CD8-positive, alpha-beta T cell (primary cell): ENCODE measurements at regions of chr7 and their contacts with region 1.

Region 1: GRCh38 chr7:128409596-128410160 is at the start of gene IMPDH1:
- DNase-seq: peak; percentile 65 to 92 (median 86)
- ATAC-seq: peak; percentile 75
- H3K4me3 ChIP-seq: peak within 1 kb of the TSS; percentile 93 to 99
- H3K4me3 Mint-ChIP-seq: peak within 1 kb of the TSS; percentile 91
- H3K27ac ChIP-seq: peak within 1 kb of the TSS; percentile 74 to 84
- H3K27ac Mint-ChIP-seq: peak within 1 kb of the TSS; percentile 84
- H3K4me1 ChIP-seq: peaks cover 37% of the 10 kb centered on the region
- H3K4me1 Mint-ChIP-seq: peaks cover 40% of the 10 kb centered on the region
- H3K27me3 ChIP-seq: no peaks in the 10 kb centered on the region
- H3K27me3 Mint-ChIP-seq: no peaks in the 10 kb centered on the region
- CTCF ChIP-seq: no peak
- total RNA-seq, gene IMPDH1: 19.6 to 20.6 TPM

Region 2: GRCh38 chr7:127651556-127652332 is 757.9 kb before region 1 on chr7 and contains the start of gene SND1:
- CTCF ChIA-PET with region 1: no interaction called
- POLR2A ChIA-PET with region 1: no interaction called
- intact Hi-C with region 1: loop called in 1 of 2 experiments (anchors 5 kb)
- DNase-seq: peak; percentile 96 to 100 (median 98)
- ATAC-seq: peak; percentile 94
- H3K4me3 ChIP-seq: peak within 1 kb of the TSS; percentile 82 to 98
- H3K4me3 Mint-ChIP-seq: peak within 1 kb of the TSS; percentile 98
- H3K27ac ChIP-seq: peak within 1 kb of the TSS; percentile 92 to 98
- H3K27ac Mint-ChIP-seq: peak within 1 kb of the TSS; percentile 99
- H3K4me1 ChIP-seq: peaks cover 35% of the 10 kb centered on the region
- H3K4me1 Mint-ChIP-seq: peaks cover 50% of the 10 kb centered on the region
- H3K27me3 ChIP-seq: no peaks in the 10 kb centered on the region
- H3K27me3 Mint-ChIP-seq: no peaks in the 10 kb centered on the region
- CTCF ChIP-seq: no peak
- total RNA-seq, gene SND1: 87.7 to 101 TPM

Region 3: GRCh38 chr7:127959770-127960169 is 449.9 kb before region 1 on chr7:
- CTCF ChIA-PET with region 1: no interaction called
- POLR2A ChIA-PET with region 1: no interaction called
- intact Hi-C with region 1: no loop called
- DNase-seq: no peak
- ATAC-seq: no peak
- H3K4me3 ChIP-seq: no peak overlapping the region
- H3K4me3 Mint-ChIP-seq: no peak overlapping the region
- H3K27ac ChIP-seq: no peak overlapping the region
- H3K27ac Mint-ChIP-seq: no peak overlapping the region
- H3K4me1 ChIP-seq: no peaks in the 10 kb centered on the region
- H3K4me1 Mint-ChIP-seq: no peaks in the 10 kb centered on the region
- H3K27me3 ChIP-seq: no peaks in the 10 kb centered on the region
- H3K27me3 Mint-ChIP-seq: no peaks in the 10 kb centered on the region
- CTCF ChIP-seq: no peak

Region 4: DNA sequence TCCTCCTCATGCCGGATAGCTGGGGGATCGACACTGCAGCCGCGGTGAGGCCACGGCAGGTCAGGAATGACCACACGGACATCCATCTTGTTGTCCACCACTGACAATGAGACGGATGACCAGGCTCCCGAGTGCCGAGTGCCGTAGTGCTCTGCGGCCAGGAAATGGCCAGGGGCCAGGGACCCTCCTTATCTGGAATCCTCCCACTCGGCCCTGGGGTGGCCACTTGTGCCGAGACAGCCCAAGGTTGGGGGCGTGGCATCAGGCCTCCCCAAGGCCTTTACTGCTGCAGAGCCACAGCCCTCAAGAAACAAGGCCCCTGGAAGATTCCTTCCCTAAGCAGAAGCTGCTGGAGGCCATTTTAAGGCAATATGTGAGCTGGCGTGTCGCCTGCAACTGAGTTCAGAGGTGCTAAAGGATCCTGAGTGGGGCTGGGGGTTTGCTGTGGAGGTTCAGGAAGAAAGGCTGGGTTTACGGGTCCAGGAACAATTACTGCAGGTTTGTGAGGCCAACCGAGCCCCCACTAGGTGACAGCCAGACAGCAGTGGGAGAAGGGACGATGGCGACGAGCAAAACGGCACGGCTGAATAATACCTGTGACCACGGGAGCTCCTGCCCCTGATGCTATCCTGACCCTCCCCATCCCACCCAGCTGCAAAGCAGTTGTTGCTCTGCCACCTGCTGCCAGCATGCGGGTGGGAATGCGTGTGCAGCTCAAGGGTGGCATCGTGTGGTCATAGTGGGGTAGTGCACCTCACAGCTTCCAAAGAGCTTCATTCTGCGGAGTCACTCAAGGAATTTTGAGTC is 200.2 kb before region 1 on chr7:
- CTCF ChIA-PET with region 1: no interaction called
- POLR2A ChIA-PET with region 1: no interaction called
- intact Hi-C with region 1: no loop called
- DNase-seq: peak; percentile 45 to 84 (median 65)
- ATAC-seq: peak; percentile 98
- H3K4me3 ChIP-seq: no peak overlapping the region
- H3K4me3 Mint-ChIP-seq: no peak overlapping the region
- H3K27ac ChIP-seq: no peak overlapping the region
- H3K27ac Mint-ChIP-seq: no peak overlapping the region
- H3K4me1 ChIP-seq: no peaks in the 10 kb centered on the region
- H3K4me1 Mint-ChIP-seq: no peaks in the 10 kb centered on the region
- H3K27me3 ChIP-seq: no peaks in the 10 kb centered on the region
- H3K27me3 Mint-ChIP-seq: peaks cover 14% of the 10 kb centered on the region
- CTCF ChIP-seq: peak; percentile 93

Region 5: GRCh38 chr7:128387216-128388144 is 22.2 kb before region 1 on chr7:
- CTCF ChIA-PET with region 1: interaction called, 27 read pairs
- POLR2A ChIA-PET with region 1: no interaction called
- intact Hi-C with region 1: no loop called
- DNase-seq: peak; percentile 49 to 77 (median 71)
- ATAC-seq: peak; percentile 98
- H3K4me3 ChIP-seq: no peak overlapping the region
- H3K4me3 Mint-ChIP-seq: no peak overlapping the region
- H3K27ac ChIP-seq: no peak overlapping the region
- H3K27ac Mint-ChIP-seq: no peak overlapping the region
- H3K4me1 ChIP-seq: no peaks in the 10 kb centered on the region
- H3K4me1 Mint-ChIP-seq: no peaks in the 10 kb centered on the region
- H3K27me3 ChIP-seq: no peaks in the 10 kb centered on the region
- H3K27me3 Mint-ChIP-seq: no peaks in the 10 kb centered on the region
- CTCF ChIP-seq: peak; percentile 73

Region 6: DNA sequence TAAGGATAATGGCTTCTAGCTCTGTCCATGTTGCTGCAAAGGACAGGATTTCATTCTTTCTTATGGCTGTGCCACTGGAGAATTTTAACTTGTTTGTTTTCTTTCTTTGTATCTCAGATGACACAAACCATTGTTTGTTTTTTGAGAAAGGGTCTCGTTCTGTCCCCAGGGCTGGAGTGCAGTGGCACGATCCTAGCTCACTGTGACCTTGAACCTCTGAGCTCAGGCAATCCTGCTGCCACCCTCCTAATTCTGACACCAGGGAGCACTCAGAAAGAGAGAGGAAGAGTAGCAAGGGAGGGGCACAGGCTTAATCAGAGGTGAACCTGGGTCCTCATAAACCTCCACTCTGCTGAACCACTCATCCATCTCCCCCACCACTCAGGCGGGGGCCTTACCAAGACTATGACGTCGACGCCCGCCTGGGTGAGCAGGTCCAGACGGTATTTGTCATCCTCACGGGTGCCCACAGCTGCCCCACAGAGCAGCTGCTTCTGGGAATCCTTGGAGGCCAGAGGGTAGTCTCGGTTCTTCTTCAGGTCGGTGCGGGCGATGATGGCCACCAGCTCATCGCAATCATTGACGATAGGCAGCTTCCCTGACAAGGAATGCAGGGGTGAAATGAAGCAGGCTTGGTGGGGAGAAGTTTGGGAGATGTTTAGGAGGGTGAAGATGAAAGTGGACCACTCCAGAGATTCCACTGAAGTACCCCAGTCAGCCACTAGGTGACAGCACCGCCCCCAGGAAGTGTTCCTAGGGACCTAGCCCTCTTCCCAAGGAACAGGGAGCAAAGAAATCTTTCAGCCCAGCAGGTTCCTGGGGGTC is 11.4 kb before region 1 on chr7:
- CTCF ChIA-PET with region 1: interaction called, 69 read pairs
- POLR2A ChIA-PET with region 1: interaction called, 3 read pairs
- intact Hi-C with region 1: no loop called
- DNase-seq: peak in 8 of 9 experiments; percentile 27 to 65 (median 50)
- ATAC-seq: peak; percentile 75
- H3K4me3 ChIP-seq: no peak overlapping the region
- H3K4me3 Mint-ChIP-seq: no peak overlapping the region
- H3K27ac ChIP-seq: no peak overlapping the region
- H3K27ac Mint-ChIP-seq: no peak overlapping the region
- H3K4me1 ChIP-seq: no peaks in the 10 kb centered on the region
- H3K4me1 Mint-ChIP-seq: peaks cover 3% of the 10 kb centered on the region
- H3K27me3 ChIP-seq: no peaks in the 10 kb centered on the region
- H3K27me3 Mint-ChIP-seq: no peaks in the 10 kb centered on the region
- CTCF ChIP-seq: peak; percentile 91

Region 7: DNA sequence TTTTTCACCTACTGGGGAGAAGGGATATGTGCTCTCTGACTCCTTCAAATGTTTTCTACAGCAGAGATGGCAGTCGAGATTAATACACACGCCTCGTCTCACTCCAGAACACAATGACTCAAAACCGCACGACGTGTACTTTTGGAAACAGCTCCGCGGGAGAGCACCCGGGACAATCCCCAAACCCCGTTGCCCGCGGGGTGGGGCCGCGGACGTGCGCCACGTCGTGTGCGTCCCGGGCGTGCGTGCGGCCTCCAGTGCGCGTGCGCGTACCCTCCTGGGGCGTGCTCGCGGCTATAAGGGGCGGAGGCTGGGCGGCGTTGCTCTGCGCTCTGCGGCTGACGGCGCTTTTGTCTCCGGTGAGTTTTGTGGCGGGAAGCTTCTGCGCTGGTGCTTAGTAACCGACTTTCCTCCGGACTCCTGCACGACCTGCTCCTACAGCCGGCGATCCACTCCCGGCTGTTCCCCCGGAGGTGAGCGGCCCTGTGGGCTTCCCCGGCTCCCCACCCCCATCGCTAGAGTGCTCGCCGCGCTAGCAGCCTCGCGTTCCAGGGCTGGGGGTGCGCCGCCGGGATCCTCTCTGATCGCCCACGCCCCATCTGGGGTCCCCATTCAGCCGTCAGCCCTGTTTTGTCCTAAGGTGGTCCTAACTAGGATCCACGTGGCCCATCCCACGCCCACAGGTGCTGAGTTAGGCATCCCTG is 46.0 kb after region 1 on chr7 and contains the start of gene HILPDA:
- CTCF ChIA-PET with region 1: interaction called, 35 read pairs
- POLR2A ChIA-PET with region 1: interaction called, 5 read pairs
- intact Hi-C with region 1: loop called (anchors 1 to 2 kb)
- DNase-seq: peak; percentile 84 to 98 (median 93)
- ATAC-seq: peak; percentile 92
- H3K4me3 ChIP-seq: peak within 1 kb of the TSS; percentile 83 to 91
- H3K4me3 Mint-ChIP-seq: peak within 1 kb of the TSS; percentile 95
- H3K27ac ChIP-seq: peak within 1 kb of the TSS; percentile 60 to 73
- H3K27ac Mint-ChIP-seq: peak within 1 kb of the TSS; percentile 98
- H3K4me1 ChIP-seq: peaks cover 19% of the 10 kb centered on the region
- H3K4me1 Mint-ChIP-seq: peaks cover 26% of the 10 kb centered on the region
- H3K27me3 ChIP-seq: no peaks in the 10 kb centered on the region
- H3K27me3 Mint-ChIP-seq: no peaks in the 10 kb centered on the region
- CTCF ChIP-seq: no peak
- total RNA-seq, gene HILPDA: 1.3 to 2.0 TPM

Region 8: DNA sequence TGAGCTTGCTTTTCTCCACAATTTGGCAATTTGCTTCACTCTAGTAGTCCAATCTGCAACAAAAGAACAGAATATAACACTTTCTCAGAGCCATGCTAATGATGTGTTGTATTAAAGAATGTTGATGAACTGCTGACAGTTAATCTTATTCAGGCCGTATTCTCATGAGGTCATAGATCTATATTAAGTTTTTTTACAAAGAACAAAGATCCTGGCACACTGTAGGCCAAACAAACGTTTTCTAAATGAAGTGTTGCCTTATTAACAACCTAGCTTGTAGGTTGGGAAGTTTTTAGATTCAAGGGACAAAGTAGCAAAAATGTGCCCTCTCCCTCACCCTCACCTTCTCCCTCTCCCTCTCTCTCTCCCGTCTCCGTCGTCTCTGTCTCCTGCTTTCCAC is 52.8 kb after region 1 on chr7:
- CTCF ChIA-PET with region 1: interaction called, 35 read pairs
- POLR2A ChIA-PET with region 1: interaction called, 4 read pairs
- intact Hi-C with region 1: no loop called
- DNase-seq: no peak
- ATAC-seq: no peak
- H3K4me3 ChIP-seq: no peak overlapping the region
- H3K4me3 Mint-ChIP-seq: no peak overlapping the region
- H3K27ac ChIP-seq: no peak overlapping the region
- H3K27ac Mint-ChIP-seq: no peak overlapping the region
- H3K4me1 ChIP-seq: peaks cover 7% of the 10 kb centered on the region
- H3K4me1 Mint-ChIP-seq: peaks cover 14% of the 10 kb centered on the region
- H3K27me3 ChIP-seq: no peaks in the 10 kb centered on the region
- H3K27me3 Mint-ChIP-seq: no peaks in the 10 kb centered on the region
- CTCF ChIP-seq: no peak

Region 9: DNA sequence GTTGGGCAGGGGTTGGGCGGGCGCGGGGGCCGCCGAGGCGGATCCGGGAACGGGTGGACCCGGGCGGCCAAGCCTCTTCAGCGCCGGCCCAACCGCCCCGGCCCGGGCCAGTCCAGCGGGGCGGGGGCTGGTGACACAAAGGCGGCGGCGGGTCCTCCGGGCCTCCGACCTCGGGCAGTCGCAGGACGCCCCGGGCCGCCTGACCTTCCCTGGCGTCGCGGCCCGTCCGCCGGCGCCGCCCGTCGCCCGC is 121.1 kb after region 1 on chr7:
- CTCF ChIA-PET with region 1: no interaction called
- POLR2A ChIA-PET with region 1: no interaction called
- intact Hi-C with region 1: loop called in 1 of 2 experiments (anchors 10 kb)
- DNase-seq: no peak
- ATAC-seq: no peak
- H3K4me3 ChIP-seq: peak overlapping the region; percentile 50
- H3K4me3 Mint-ChIP-seq: no peak overlapping the region
- H3K27ac ChIP-seq: peak overlapping the region; percentile 47 to 79
- H3K27ac Mint-ChIP-seq: no peak overlapping the region
- H3K4me1 ChIP-seq: peaks cover 15% of the 10 kb centered on the region
- H3K4me1 Mint-ChIP-seq: peaks cover 34% of the 10 kb centered on the region
- H3K27me3 ChIP-seq: no peaks in the 10 kb centered on the region
- H3K27me3 Mint-ChIP-seq: no peaks in the 10 kb centered on the region
- CTCF ChIP-seq: no peak